ENCODE measurements at regions of chr19 and their contacts with region 1.

Region 1: DNA sequence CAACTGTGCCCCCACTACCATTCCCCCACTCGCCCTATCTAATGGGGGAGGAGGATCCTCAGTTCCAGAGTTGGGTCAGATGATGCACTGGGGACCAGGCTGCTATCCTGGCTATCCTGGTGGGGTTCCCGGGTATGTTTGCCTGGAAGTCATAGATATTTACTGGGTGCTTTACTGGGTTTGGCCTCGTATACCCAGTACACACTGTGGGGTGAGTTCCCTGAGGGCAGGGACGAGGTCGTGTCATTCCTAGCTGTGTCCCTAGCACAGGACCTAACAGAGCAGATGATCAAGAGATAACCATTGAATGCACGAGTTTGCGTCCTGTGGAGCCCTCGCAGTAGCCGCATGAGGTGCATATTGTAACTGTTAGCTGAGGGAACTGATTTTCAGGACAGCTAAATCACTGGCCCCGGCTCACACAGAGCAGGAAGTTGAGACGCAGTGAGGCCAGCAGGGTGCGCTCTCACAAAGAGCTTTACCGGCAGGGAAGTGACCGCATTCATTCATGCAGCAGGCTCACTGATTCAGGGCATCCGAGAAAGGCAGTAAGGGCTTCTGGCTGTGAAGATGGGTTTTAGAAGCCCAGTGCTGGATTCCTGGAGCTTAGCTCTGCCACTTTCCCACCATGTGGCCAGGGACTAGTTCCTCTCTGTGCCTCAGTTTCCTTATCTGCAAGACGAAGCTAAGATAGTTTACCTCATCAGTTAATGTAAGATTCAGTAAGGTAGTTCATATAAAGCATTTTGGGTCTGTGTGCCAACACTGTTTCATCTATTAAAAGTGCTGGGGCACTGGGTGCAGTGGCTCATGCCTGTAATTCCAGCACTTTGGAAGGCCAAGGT is 6.0 kb downstream of the RUVBL2 start:
- DNase-seq: peak; percentile 56 to 78
- ATAC-seq: peak; percentile 47 to 75 (median 70)
- H3K4me3 ChIP-seq: no peak overlapping the region
- H3K27ac ChIP-seq: peak overlapping the region; percentile 16
- H3K4me1 ChIP-seq: peaks cover 14% of the 10 kb centered on the region
- H3K27me3 ChIP-seq: no peaks in the 10 kb centered on the region
- CTCF ChIP-seq: peak; percentile 60

Region 2: GRCh38 chr19:49064768-49065611 is 65.3 kb after region 1 on chr19 and contains the start of gene NTF4:
- intact Hi-C with region 1: loop called (anchors 5 kb)
- DNase-seq: peak; percentile 19 to 56
- ATAC-seq: peak; percentile 41 to 54 (median 48)
- H3K4me3 ChIP-seq: peak within 1 kb of the TSS; percentile 52
- H3K27ac ChIP-seq: peak within 1 kb of the TSS; percentile 63
- H3K4me1 ChIP-seq: peaks cover 17% of the 10 kb centered on the region
- H3K27me3 ChIP-seq: peaks cover 0 to 4% (median 0%) of the 10 kb centered on the region in 3 donors
- CTCF ChIP-seq: no peak
- total RNA-seq, gene NTF4: 1.8 to 6.9 (median 5.1) TPM

Measured in psoas muscle (tissue), 8 donors.